Ascending aorta (tissue), 2 donors: ENCODE measurements at regions of chr10 and their contacts with region 1.

Region 1: GRCh38 chr10:125000366-125001312 is 58.7 kb downstream of the ZRANB1 start:
- DNase-seq: peak in 1 of 2 donors; percentile 70
- H3K4me3 ChIP-seq: peak overlapping the region; percentile 34 to 54
- H3K27ac ChIP-seq: peak overlapping the region; percentile 94 to 98
- H3K4me1 ChIP-seq: peaks cover 35 to 57% of the 10 kb centered on the region in 2 donors
- H3K27me3 ChIP-seq: no peaks in the 10 kb centered on the region
- CTCF ChIP-seq: peak in 2 of 3 experiments; percentile 14 to 29

Region 2: GRCh38 chr10:124916585-124917427 is 83.8 kb before region 1 on chr10:
- intact Hi-C with region 1: loop called (anchors 2 kb)
- DNase-seq: peak; percentile 91 to 99
- H3K4me3 ChIP-seq: peak overlapping the region; percentile 95 to 96
- H3K27ac ChIP-seq: peak overlapping the region; percentile 98
- H3K4me1 ChIP-seq: peaks cover 3 to 29% of the 10 kb centered on the region in 2 donors
- H3K27me3 ChIP-seq: no peaks in the 10 kb centered on the region
- CTCF ChIP-seq: peak in 1 of 3 experiments; percentile 6

Region 3: GRCh38 chr10:125015312-125015944 is 14.8 kb after region 1 on chr10:
- intact Hi-C with region 1: loop called (anchors 1 kb)
- DNase-seq: peak in 1 of 2 donors; percentile 84
- H3K4me3 ChIP-seq: peak overlapping the region in 1 of 2 donors; percentile 44
- H3K27ac ChIP-seq: peak overlapping the region; percentile 90 to 94
- H3K4me1 ChIP-seq: peaks cover 42 to 90% of the 10 kb centered on the region in 2 donors
- H3K27me3 ChIP-seq: no peaks in the 10 kb centered on the region
- CTCF ChIP-seq: no peak

Region 4: DNA sequence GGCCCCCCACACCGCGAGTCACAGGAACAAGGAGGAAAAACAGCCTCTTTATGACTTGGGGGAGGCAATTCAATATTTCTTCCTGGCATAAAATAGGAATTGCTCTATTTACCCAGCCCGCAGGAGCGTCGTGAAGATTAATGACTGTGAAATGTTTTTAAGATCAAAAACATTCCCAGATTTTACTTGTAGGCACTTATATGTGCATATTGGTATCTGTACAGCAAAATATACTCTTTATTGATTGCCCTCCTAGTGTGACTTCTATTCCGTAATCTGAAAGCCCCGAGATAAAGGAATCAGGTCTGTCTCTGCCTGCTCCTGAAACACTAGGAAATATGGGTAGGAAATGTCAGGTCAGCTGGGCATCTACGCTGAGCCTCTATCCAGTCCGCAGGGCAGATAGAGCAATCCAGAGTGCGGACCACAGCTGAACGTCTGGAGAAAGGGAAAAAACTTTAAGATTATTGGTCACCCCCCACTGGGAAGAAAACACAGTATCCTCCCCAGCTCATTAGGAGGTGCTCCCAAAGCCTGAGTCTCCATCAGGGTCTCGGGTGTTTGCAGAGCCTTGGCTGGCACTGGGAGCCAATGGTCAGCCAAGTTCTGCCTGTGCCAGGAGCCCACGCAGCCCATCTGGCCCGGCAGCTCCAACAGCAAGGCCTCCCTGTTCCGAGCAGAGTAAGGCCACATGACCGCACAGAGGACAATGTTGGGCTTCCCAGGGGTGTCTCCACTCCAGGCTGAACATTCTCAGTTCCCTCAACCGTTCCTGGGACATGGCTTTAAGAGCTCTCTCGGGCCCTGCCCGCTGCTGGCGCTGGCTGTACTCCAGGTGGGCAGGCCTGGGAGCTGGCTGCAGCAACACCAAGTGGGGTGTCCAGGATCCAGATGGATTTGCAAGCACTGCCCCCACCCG is 152.1 kb after region 1 on chr10:
- intact Hi-C with region 1: loop called (anchors 5 kb)
- DNase-seq: peak in 1 of 2 donors; percentile 82
- H3K4me3 ChIP-seq: peak overlapping the region; percentile 28 to 43
- H3K27ac ChIP-seq: peak overlapping the region; percentile 71 to 80
- H3K4me1 ChIP-seq: peaks cover 42 to 79% of the 10 kb centered on the region in 2 donors
- H3K27me3 ChIP-seq: no peaks in the 10 kb centered on the region
- CTCF ChIP-seq: no peak